ENCODE measurements at regions of chr2 and their contacts with region 1.

Region 1: DNA sequence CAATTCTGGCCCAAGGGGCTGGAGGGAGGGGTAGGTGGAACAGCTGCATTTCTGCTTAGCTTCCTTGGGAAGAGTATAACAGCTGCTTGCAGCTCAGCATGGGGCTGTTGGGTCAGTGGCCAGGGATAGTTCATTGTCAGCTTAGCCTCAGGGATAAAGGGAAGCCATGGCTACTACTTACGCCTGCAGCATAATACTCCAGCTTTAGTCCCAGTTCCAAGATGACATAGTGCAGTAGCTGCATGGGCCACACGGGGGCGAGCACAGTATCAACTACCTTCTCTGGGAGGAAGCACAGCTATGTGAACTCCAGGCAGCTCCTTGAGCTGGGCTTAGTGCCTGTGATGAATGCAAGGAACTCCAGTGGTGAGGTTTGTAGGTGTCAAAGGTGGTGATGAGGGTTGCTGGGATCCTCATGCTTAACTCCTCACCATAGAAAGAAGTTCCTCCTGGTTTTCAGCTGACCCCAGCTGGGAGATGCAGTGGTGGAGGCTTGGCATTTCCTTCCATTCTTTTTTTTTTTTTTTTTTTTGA is 35.4 kb upstream of the RHOB start:
- DNase-seq: peak; percentile 83
- H3K4me3 Mint-ChIP-seq: no peak overlapping the region
- H3K27ac Mint-ChIP-seq: no peak overlapping the region
- H3K4me1 Mint-ChIP-seq: no peaks in the 10 kb centered on the region
- H3K27me3 Mint-ChIP-seq: no peaks in the 10 kb centered on the region

Region 2: DNA sequence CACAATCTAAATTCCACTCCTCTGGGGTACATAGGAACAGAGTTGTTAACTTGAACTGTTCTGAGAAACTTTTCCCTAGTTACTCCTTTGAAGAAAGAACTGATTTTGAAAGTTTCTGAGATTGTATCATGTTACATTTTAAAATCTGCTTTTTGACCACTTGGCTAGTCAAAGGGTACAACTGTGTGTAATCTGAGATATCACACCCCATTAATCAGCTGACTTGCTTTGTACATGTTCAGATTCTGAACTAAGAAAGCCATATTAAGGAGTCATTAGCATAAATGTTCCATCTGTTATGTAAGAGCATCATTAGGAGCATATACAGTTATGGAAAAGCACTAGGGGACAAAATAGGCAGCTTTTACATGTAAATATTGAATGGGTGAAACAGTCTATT is 417.7 kb before region 1 on chr2:
- CTCF ChIA-PET with region 1: no interaction called
- POLR2A ChIA-PET with region 1: no interaction called
- intact Hi-C with region 1: no loop called
- DNase-seq: no peak
- H3K4me3 Mint-ChIP-seq: no peak overlapping the region
- H3K27ac Mint-ChIP-seq: no peak overlapping the region
- H3K4me1 Mint-ChIP-seq: peaks cover 14% of the 10 kb centered on the region
- H3K27me3 Mint-ChIP-seq: peaks cover 11% of the 10 kb centered on the region

Region 3: DNA sequence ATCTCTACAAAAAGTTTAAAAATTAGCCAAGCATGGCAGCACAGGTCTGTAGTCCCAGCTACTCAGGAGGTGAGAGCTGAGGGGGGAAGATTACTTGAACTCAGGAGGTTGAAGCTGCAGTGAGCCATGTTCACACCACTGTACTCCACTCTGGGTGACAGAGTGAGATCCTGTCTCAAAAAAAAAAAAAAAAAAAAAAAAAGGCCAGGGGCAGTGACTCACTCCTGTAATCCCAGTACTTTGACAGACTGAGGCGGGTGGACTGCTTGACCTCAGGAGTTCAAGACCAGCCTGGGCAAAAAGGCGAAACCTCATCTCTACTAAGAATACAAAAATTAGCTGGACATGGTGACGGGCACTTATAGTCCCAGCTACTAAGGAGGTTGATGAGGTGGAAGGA is 97.8 kb before region 1 on chr2:
- CTCF ChIA-PET with region 1: no interaction called
- POLR2A ChIA-PET with region 1: no interaction called
- intact Hi-C with region 1: no loop called
- DNase-seq: no peak
- H3K4me3 Mint-ChIP-seq: no peak overlapping the region
- H3K27ac Mint-ChIP-seq: no peak overlapping the region
- H3K4me1 Mint-ChIP-seq: peaks cover 22% of the 10 kb centered on the region
- H3K27me3 Mint-ChIP-seq: no peaks in the 10 kb centered on the region

Region 4: GRCh38 chr2:20398956-20399567 is 12.4 kb before region 1 on chr2:
- CTCF ChIA-PET with region 1: interaction called, 33 read pairs
- POLR2A ChIA-PET with region 1: no interaction called
- intact Hi-C with region 1: no loop called
- DNase-seq: no peak
- H3K4me3 Mint-ChIP-seq: no peak overlapping the region
- H3K27ac Mint-ChIP-seq: no peak overlapping the region
- H3K4me1 Mint-ChIP-seq: no peaks in the 10 kb centered on the region
- H3K27me3 Mint-ChIP-seq: peaks cover 6% of the 10 kb centered on the region

Region 5: GRCh38 chr2:20438334-20439192 is 27.1 kb after region 1 on chr2:
- CTCF ChIA-PET with region 1: interaction called, 27 read pairs
- POLR2A ChIA-PET with region 1: no interaction called
- intact Hi-C with region 1: no loop called
- DNase-seq: peak; percentile 3
- H3K4me3 Mint-ChIP-seq: no peak overlapping the region
- H3K27ac Mint-ChIP-seq: no peak overlapping the region
- H3K4me1 Mint-ChIP-seq: peaks cover 2% of the 10 kb centered on the region
- H3K27me3 Mint-ChIP-seq: peaks cover 14% of the 10 kb centered on the region

Region 6: DNA sequence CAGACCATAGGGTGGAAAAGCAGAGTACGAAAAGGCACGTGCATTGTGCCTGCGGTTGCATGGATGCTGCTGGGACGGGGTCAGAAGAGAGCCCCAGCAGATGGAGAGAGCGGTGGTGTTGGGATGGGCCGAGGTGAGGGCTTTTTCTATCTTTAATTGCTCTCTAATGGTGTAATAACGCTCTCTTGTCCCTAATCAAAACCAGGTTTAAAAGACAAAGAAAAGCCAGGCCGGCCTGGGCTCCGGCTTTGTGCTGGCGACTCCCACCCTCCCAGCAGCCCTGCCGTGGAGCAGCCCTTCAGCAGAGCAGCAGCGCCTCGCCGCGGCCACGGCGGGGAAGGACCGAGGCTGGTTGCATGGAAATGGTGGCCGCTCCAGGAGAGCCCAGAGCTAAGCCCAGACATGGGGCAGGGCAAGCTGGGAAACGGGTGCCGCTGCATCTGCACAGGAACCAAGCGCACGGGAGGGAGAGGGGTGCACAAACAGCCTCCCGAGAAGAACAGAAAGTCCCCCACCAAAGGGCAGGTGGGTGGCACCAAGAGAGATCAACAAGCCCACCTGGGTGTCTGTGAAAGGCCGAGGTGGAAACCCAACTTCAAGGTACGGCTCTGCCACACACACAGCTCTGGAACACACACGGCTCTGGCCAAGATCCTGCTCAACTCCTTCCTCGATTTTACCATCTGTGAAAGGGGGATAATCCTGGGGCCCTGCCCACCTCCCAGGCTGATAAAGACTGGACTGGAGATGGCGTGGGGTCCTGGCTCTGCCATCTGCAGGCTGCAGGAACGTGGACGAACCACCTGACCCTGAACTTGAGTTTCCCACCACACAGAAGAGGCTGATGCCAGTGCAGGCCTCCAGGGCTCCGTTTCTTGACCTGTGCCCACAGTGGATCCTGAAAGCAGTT is 224.5 kb after region 1 on chr2:
- CTCF ChIA-PET with region 1: interaction called, 126 read pairs
- POLR2A ChIA-PET with region 1: no interaction called
- intact Hi-C with region 1: no loop called
- DNase-seq: peak; percentile 69
- H3K4me3 Mint-ChIP-seq: no peak overlapping the region
- H3K27ac Mint-ChIP-seq: no peak overlapping the region
- H3K4me1 Mint-ChIP-seq: no peaks in the 10 kb centered on the region
- H3K27me3 Mint-ChIP-seq: no peaks in the 10 kb centered on the region

Region 7: DNA sequence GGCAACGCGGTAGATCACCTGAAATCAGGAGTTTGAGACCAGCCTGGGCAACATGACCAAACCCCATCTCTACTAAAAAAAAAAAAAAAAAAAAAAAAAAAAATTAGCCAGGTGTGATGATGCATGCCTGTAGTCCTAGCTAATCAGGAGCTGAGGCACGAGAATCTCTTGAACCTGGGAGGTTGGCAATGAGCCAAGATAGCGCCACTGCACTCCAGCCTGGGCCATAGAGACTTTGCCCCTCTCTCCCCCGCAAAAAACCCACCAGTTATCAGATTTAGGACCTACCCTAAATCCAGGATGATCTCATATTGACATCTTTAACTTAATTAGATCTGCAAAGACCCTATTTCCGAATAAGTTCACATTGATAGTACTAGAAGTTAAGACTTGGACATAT is 440.7 kb after region 1 on chr2:
- CTCF ChIA-PET with region 1: no interaction called
- POLR2A ChIA-PET with region 1: no interaction called
- intact Hi-C with region 1: no loop called
- DNase-seq: no peak
- H3K4me3 Mint-ChIP-seq: no peak overlapping the region
- H3K27ac Mint-ChIP-seq: no peak overlapping the region
- H3K4me1 Mint-ChIP-seq: no peaks in the 10 kb centered on the region
- H3K27me3 Mint-ChIP-seq: peaks cover 7% of the 10 kb centered on the region

Measured in activated CD4-positive, alpha-beta memory T cell treated with anti-CD3 and anti-CD28 coated beads for 36 hours (primary cell).